Activated CD4-positive, alpha-beta T cell treated with anti-CD3 and anti-CD28 coated beads, Interleukin-2, amount 10 ng/mL, durations not matched to agents 24 days and 14 days (primary cell): ENCODE measurements at regions of chr12 and their contacts with region 1.

Region 1: DNA sequence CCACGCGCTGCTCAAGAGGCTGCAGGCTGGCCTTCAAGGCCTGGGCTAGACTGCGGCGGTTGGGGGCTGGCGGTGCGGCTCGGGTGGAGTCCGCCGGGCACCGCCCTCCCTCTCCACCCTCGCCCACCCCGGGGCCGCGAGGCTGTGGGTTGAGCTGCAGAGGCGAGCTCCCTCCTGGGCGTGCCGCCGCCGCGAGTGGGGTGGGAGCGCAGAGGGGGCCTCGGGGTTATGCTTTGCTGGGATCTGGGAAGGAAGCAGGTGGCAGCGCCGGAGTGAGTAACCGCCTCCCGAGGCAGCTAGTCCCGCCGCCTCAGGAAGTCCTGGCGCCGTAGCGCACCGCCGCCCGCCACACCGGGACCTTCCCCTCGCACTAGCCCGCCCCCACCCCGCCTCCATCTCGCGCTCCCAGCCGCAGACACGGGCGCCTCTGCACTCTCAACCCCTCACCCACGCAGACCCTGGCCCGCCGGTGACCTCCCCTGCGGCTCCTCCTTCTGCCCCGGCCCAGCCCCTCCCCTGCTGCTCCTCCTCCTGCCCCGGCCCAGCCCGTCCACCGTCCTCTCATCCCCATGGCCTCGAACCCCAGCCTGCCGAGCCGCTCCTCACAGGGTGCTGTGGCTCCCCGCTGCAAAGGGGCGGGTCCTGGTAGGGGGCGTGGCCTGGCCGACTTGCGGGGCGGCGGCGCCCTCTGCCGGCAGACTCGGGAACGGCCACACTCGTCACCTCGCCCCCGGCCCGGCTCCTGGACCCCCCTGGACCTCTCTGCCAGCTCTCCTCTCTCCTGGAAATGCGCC is 16.6 kb downstream of the TAMALIN start:
- DNase-seq: peak; percentile 98
- H3K4me3 Mint-ChIP-seq: peak overlapping the region; percentile 87
- H3K27ac Mint-ChIP-seq: peak overlapping the region; percentile 96
- H3K4me1 Mint-ChIP-seq: peaks cover 39% of the 10 kb centered on the region
- H3K27me3 Mint-ChIP-seq: peaks cover 3% of the 10 kb centered on the region

Region 2: GRCh38 chr12:51951843-51952722 is 71.3 kb before region 1 on chr12:
- intact Hi-C with region 1: loop called (anchors 2 kb)
- DNase-seq: peak; percentile 65
- H3K4me3 Mint-ChIP-seq: peak overlapping the region; percentile 74
- H3K27ac Mint-ChIP-seq: peak overlapping the region; percentile 10
- H3K4me1 Mint-ChIP-seq: peaks cover 26% of the 10 kb centered on the region
- H3K27me3 Mint-ChIP-seq: peaks cover 44% of the 10 kb centered on the region

Region 3: GRCh38 chr12:51994959-51995358 is 28.4 kb before region 1 on chr12:
- intact Hi-C with region 1: loop called (anchors 1 kb)
- DNase-seq: no peak
- H3K4me3 Mint-ChIP-seq: no peak overlapping the region
- H3K27ac Mint-ChIP-seq: no peak overlapping the region
- H3K4me1 Mint-ChIP-seq: peaks cover 9% of the 10 kb centered on the region
- H3K27me3 Mint-ChIP-seq: no peaks in the 10 kb centered on the region

Region 4: DNA sequence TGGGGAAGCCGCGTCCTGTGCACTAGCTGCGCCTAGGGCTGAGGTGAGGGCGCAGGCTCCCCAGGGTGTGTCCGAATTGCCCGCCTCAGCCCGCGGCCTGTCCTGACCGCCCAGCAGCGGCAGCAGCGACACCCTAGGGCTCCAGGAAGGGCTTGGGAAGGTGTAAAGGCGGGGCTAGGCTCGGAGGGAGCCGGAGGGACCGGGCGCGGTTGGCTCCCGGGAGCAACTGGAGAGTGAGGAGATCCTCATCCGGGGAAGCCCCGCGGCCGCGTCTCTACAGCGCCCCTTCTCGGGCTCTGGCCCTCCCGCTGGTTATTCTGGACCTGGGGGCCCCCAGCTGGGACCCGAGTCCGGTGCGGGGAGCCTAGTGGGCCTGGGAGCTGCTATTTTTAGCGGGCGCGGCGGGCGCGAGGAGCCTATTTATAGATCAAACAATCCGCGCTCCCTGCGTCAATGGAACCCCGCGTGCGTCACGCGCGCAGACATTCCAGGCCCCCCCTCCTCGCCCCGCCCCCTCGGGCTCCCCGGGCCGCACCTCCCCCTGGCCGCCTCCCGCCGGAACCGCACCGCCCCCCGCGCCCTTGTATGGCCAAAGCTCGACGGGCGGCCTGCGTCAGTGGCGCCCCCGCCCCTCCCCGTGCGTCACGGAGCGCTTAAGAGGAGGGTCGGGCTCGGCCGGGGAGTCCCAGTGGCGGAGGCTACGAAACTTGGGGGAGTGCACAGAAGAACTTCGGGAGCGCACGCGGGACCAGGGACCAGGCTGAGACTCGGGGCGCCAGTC is 27.6 kb after region 1 on chr12 and contains the start of gene NR4A1:
- intact Hi-C with region 1: loop called (anchors 1 kb)
- DNase-seq: peak; percentile 100
- H3K4me3 Mint-ChIP-seq: peak within 1 kb of the TSS; percentile 97
- H3K27ac Mint-ChIP-seq: peak within 1 kb of the TSS; percentile 95
- H3K4me1 Mint-ChIP-seq: peaks cover 40% of the 10 kb centered on the region
- H3K27me3 Mint-ChIP-seq: peaks cover 5% of the 10 kb centered on the region
- total RNA-seq, gene NR4A1: 55.0 and 57.7 TPM in 2 replicates

Region 5: GRCh38 chr12:52082988-52083637 is 59.7 kb after region 1 on chr12:
- intact Hi-C with region 1: loop called (anchors 1 kb)
- DNase-seq: peak; percentile 91
- H3K4me3 Mint-ChIP-seq: no peak overlapping the region
- H3K27ac Mint-ChIP-seq: peak overlapping the region; percentile 3
- H3K4me1 Mint-ChIP-seq: peaks cover 7% of the 10 kb centered on the region
- H3K27me3 Mint-ChIP-seq: peaks cover 12% of the 10 kb centered on the region

Region 6: GRCh38 chr12:52506858-52507715 is 483.7 kb after region 1 on chr12:
- intact Hi-C with region 1: no loop called
- DNase-seq: peak; percentile 49
- H3K4me3 Mint-ChIP-seq: no peak overlapping the region
- H3K27ac Mint-ChIP-seq: no peak overlapping the region
- H3K4me1 Mint-ChIP-seq: no peaks in the 10 kb centered on the region
- H3K27me3 Mint-ChIP-seq: peaks cover 41% of the 10 kb centered on the region